ENCODE measurements at regions of chr16 and their contacts with region 1.

Region 1: GRCh38 chr16:28943281-28943680 is 7.5 kb upstream of the NFATC2IP start:
- DNase-seq: no peak
- ATAC-seq: no peak
- H3K4me3 ChIP-seq: no peak overlapping the region
- H3K4me3 Mint-ChIP-seq: no peak overlapping the region
- H3K27ac ChIP-seq: no peak overlapping the region
- H3K27ac Mint-ChIP-seq: no peak overlapping the region
- H3K4me1 ChIP-seq: peaks cover 12% of the 10 kb centered on the region
- H3K4me1 Mint-ChIP-seq: peaks cover 8 to 13% of the 10 kb centered on the region in 2 donors
- H3K27me3 ChIP-seq: no peaks in the 10 kb centered on the region
- H3K27me3 Mint-ChIP-seq: no peaks in the 10 kb centered on the region
- CTCF ChIP-seq: no peak

Region 2: GRCh38 chr16:28873536-28874201 is 69.6 kb before region 1 on chr16:
- intact Hi-C with region 1: loop called (anchors 1 kb)
- DNase-seq: peak; percentile 49 to 77
- ATAC-seq: peak; percentile 82 to 95 (median 90)
- H3K4me3 ChIP-seq: no peak overlapping the region
- H3K4me3 Mint-ChIP-seq: no peak overlapping the region
- H3K27ac ChIP-seq: no peak overlapping the region
- H3K27ac Mint-ChIP-seq: no peak overlapping the region
- H3K4me1 ChIP-seq: peaks cover 5% of the 10 kb centered on the region
- H3K4me1 Mint-ChIP-seq: peaks cover 4 to 16% of the 10 kb centered on the region in 2 donors
- H3K27me3 ChIP-seq: no peaks in the 10 kb centered on the region
- H3K27me3 Mint-ChIP-seq: no peaks in the 10 kb centered on the region
- CTCF ChIP-seq: peak; percentile 69

Region 3: DNA sequence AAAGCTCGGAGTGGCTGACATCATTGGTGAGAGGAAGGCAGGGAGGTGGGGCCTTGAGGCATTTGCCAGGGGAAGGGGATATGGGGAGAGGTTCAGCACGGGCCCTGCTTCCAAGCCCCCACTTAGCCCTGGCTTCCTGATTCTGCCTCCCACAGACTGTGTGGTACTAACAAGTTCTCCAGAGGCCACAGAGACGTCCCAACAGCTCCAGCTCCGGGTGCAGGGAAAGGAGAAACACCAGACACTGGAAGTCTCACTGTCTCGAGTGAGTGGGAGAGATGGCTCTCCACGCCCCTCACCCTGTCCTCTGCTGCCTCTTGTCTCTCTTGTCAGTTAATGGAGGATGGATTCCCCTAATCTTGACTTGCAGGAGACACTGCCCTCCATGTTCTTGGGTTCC is 15.6 kb after region 1 on chr16:
- intact Hi-C with region 1: no loop called
- DNase-seq: no peak
- ATAC-seq: no peak
- H3K4me3 ChIP-seq: no peak overlapping the region
- H3K4me3 Mint-ChIP-seq: no peak overlapping the region
- H3K27ac ChIP-seq: no peak overlapping the region
- H3K27ac Mint-ChIP-seq: no peak overlapping the region
- H3K4me1 ChIP-seq: peaks cover 8% of the 10 kb centered on the region
- H3K4me1 Mint-ChIP-seq: peaks cover 5 to 10% of the 10 kb centered on the region in 2 donors
- H3K27me3 ChIP-seq: no peaks in the 10 kb centered on the region
- H3K27me3 Mint-ChIP-seq: no peaks in the 10 kb centered on the region
- CTCF ChIP-seq: no peak

Measured in natural killer cell (primary cell).